Motor neuron (in vitro differentiated cells): ENCODE measurements at regions of chr11 and their contacts with region 1.

Region 1: DNA sequence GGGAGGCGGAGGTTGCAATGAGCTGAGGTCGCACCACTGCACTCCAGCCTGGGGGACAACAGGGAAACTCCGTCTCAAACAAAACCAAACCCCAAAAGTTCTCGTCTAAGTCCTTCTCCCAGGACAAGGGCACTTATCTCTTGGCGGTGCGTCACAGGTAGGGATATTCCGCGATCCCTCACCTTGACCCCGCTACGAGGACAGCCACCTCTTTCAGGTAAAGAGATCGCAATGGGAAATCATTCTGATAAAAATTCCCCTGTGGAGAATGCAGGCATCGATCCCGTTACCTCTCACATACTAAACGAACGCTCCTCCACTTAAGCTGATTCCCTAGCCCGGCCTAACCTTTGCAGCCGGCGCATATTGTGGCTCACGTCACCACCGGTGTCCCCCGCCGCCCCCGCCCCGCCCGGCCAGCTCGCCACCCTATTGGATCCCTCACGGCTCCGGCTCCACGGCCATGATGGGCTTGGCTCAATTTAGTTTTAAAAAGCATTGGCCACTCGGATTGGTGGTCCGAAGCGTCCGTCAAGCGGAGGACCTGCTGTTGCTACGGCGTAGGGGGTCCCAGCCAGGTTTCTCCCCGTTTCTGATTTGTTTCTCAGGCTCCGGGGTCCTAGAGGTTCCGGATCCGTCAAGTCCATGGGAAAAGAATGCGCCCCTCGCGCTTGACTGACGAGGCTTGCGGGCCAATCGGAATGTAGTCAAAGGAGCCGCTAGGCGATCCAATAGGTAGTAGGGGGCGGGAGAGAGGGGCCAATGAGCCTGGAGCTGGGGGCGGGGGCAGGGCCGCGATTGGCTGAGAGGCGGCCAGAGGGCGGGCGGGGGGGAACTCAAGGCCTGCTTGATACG is 439 bp upstream of the PPP6R3 start:
- ATAC-seq: peak; percentile 80 to 92 (median 88)
- H3K4me3 ChIP-seq: peak overlapping the region; percentile 74 to 98 (median 92)
- H3K27ac ChIP-seq: peak overlapping the region; percentile 95 to 98
- H3K4me1 ChIP-seq: peaks cover 11 to 14% of the 10 kb centered on the region in 2 donors

Region 2: DNA sequence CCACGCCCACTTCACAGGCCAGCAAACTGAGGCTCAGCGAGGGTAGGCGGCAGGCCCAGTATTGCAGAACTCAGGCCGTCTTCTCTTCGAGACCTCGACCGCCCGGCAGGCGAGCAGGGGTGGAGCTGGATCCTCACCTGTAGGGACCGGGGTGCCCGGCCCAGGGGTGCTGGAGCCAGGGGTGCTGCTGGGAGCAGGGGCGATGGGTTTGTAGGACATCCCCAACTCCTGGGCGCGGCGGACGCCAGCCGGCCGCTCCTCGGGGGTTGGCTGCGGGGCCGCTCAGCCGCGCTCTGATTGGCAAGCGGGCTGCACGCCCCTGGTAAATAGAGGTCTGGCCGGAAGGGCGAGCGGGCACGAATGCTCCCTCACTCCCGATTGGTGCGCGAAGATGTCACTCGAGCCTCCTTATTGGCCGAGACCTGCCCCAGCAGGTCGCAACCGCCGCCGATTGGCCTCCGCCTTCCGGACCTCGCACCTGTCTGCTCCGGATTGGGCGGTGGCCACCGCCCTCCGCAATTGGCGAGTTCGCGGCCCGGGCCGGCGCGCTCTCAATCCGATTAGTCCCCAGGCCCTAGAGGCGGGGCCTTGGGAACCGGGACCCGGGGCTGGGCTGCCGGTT is 952.1 kb before region 1 on chr11 and contains the start of gene CDK2AP2:
- in situ Hi-C with region 1: no loop called
- ATAC-seq: peak; percentile 64 to 84 (median 79)
- H3K4me3 ChIP-seq: peak within 1 kb of the TSS; percentile 84 to 97 (median 90)
- H3K27ac ChIP-seq: peak within 1 kb of the TSS; percentile 96 to 99
- H3K4me1 ChIP-seq: peaks cover 14 to 25% of the 10 kb centered on the region in 2 donors
- total RNA-seq, gene CDK2AP2: 13.8 to 39.3 (median 19.8) TPM

Region 3: DNA sequence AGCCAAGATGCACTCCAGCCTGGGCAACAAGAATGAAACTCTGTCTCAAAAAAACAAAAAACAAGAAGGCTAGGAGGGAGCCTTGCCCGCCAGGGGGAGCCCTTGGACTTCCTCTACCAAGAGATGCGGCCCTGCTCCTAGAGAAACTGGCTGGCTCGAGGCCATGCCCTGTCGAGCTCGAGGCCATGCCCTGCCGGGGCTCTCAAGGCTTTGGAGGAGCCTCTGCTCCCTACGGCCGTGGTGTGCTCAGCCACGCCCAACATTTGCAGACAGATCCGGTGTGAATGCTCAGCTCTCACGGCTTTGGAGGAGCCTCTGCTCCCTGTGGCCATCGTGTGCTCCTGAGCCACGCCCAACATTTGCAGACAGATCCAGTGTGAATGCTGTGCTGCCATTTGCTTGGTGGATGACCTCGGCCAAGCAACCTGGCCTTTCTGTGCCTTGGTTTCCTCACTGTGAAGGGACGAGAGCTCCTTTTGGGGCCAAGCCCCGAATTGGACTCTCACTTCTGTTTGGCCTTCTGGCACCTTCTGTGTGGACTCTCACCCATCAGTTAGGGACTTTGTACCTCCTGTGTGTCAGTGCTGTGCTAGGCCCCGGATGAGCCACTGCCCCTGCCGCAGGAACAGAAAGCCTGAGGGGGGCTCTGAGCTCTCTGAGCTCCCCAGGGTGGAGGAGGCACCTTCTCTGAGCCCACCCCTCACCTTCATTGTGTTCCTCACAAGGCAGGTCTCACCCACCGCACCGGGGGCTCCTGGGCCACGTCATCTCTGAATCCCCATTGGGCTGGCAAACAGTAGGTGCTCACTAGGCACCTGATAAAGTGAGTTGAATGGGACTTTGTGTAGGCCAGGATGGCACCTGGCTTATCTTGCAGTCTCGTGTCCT is 202.4 kb before region 1 on chr11:
- in situ Hi-C with region 1: loop called in 2 of 9 experiments (anchors 10 to 25 kb)
- ATAC-seq: peak; percentile 81 to 93 (median 84)
- H3K4me3 ChIP-seq: no peak overlapping the region
- H3K27ac ChIP-seq: no peak overlapping the region
- H3K4me1 ChIP-seq: peaks cover 0 to 3% of the 10 kb centered on the region in 2 donors

Region 4: GRCh38 chr11:68521969-68522652 is 62.0 kb after region 1 on chr11:
- in situ Hi-C with region 1: no loop called
- ATAC-seq: peak in 3 of 8 experiments; percentile 50 to 79 (median 73)
- H3K4me3 ChIP-seq: no peak overlapping the region
- H3K27ac ChIP-seq: no peak overlapping the region
- H3K4me1 ChIP-seq: peaks cover 0 to 2% of the 10 kb centered on the region in 2 donors

Region 5: GRCh38 chr11:68584097-68584496 is 124.0 kb after region 1 on chr11:
- in situ Hi-C with region 1: no loop called
- ATAC-seq: peak in 2 of 8 experiments; percentile 12 to 25
- H3K4me3 ChIP-seq: no peak overlapping the region
- H3K27ac ChIP-seq: no peak overlapping the region
- H3K4me1 ChIP-seq: no peaks in the 10 kb centered on the region

Region 6: DNA sequence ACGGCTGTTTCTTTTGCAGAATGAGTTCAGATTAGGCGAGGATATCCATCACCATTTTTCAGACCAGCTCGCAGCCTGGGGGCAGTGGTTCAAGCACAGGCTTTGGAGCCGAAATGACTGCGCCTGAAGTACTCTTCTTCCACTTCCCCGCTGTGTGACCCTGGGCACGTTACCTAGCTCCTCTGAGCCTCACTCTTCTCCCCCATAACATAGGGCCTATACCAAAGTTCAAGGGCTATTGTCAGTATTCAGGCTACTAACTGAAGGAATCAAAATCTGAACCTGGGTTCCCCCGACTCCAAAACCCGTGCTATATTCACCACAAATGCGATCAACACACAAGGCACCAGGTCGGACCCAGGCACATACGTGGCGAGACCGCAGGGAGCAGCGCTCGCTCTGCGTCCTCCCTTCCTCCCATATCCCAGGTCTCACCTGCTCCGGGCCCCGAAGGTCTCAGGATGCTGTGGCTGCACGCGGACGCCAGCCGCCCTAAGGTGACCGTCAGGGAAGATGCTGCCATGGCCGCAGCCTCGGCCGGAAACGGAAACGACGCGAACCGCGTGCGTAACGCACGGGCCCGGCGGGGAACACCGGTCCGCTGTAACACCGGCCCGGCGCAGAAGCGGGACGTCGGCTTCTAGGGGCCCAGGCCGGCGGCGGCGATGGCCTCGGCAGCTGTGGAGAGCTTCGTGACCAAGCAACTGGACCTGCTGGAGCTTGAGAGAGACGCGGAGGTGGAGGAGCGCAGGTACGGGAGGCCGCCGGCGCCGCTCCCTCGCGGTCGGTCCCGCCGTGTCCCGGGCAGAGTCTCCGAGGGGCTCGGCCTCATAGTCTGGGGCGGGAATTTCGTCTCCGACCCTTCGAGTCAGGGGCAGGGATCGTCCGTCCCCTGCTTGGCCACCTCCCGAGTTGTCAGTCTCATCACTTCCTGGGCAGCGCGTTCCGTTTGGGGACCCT is 443.5 kb after region 1 on chr11 and contains the starts of genes IGHMBP2 and MRPL21:
- in situ Hi-C with region 1: no loop called
- ATAC-seq: peak; percentile 91 to 98 (median 97)
- H3K4me3 ChIP-seq: peak within 1 kb of the TSS; percentile 88 to 100 (median 99)
- H3K27ac ChIP-seq: peak within 1 kb of the TSS; percentile 78 to 92
- H3K4me1 ChIP-seq: peaks cover 10 to 14% of the 10 kb centered on the region in 2 donors
- total RNA-seq, gene IGHMBP2: 6.7 to 21.0 (median 10.3) TPM
- total RNA-seq, gene MRPL21: 78.5 to 150 (median 92.6) TPM